ENCODE measurements at regions of chr12 and their contacts with region 1.

Region 1: DNA sequence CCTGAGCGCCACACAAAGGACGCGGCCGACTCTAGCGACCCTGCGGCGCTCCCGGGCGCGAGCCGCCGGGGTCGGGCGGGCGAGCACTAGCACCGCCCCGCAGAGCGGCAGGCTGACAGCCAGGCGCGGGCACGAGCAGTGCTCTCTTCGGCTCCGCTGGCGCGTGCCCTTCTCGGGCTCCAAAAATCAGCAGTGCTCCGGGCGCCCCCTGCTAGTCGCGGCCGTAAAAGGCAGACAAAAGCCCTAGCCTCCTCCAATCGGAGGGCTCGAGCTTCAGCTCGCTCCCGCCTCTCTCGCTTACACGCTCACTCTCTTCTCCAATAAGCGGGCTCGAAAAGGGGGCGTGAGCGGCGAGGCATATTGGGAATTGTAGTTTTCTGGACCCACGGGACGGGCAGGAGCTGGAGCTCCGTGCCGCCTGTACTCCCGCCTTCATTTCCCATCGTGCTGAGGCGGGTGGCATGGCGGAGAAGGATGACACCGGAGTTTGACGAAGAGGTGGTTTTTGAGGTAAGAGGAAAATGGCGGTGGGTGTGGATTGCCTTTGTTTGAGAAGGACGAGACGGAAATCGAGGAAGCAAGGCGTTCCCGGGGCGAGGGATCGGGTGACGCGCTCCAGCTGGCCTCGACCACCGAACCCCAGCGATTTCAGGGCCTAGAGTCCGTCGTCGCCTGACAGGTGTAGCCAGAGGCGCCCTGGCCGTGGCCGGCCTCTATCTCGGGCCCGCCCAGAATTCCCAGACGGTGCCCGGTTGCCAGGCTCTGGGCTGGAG is at the starts of genes FGD6 and VEZT:
- DNase-seq: peak; percentile 96 to 99 (median 99)
- H3K4me3 ChIP-seq: peak within 1 kb of the TSS; percentile 58 to 99 (median 89)
- H3K27ac ChIP-seq: peak within 1 kb of the TSS; percentile 75 to 99 (median 96)
- H3K27me3 ChIP-seq: no peaks in the 10 kb centered on the region
- CTCF ChIP-seq: peak; percentile 25 to 83 (median 64)
- total RNA-seq, gene FGD6: 10.5 to 41.6 (median 21.8) TPM
- total RNA-seq, gene VEZT: 79.5 to 165 (median 110) TPM

Region 2: DNA sequence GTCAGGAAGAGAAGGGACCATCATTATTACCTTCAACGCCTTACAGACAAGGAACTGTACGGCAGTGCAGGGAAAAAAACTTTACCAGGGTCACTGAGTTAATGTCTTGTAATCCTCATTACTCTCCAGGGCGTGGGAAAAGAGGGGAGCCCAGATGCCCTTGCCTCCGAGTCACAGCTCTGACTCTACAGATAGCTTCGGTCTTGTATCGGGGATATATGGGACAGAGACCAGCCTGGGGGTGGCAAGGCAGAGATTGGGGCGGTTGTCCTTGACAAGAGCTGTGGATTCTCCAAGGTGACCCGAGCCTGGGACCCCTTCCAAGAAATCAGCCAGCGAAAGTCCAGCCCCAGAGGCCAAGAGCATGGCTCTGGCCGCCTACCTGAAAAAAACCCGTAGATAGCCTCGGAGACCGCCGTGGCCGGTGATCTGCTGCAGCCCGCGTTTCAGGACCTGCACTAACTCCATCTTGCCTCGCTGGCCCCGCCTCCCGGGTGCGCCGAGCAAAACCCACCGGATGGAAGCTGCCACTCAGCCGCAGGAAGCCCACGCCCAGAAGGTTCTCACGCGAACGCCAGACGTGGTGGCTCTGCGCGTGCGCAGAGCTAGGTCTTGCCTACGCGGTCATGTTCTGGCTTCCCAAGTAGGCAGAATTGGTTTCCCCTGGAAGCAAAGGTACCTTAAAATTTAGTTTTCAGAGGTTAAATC is 214.2 kb before region 1 on chr12 and contains the start of gene NDUFA12:
- intact Hi-C with region 1: loop called in 1 of 2 experiments (anchors 2 kb)
- DNase-seq: peak; percentile 89 to 96 (median 95)
- H3K4me3 ChIP-seq: peak within 1 kb of the TSS; percentile 63 to 98 (median 88)
- H3K27ac ChIP-seq: peak within 1 kb of the TSS; percentile 51 to 95 (median 86)
- H3K27me3 ChIP-seq: no peaks in the 10 kb centered on the region
- CTCF ChIP-seq: peak in 35 of 56 donors; percentile 11 to 49 (median 25)
- total RNA-seq, gene NDUFA12: 53.8 to 149 (median 106) TPM

Region 3: GRCh38 chr12:95072900-95073697 is 144.5 kb before region 1 on chr12 and contains the start of gene NR2C1:
- intact Hi-C with region 1: loop called (anchors 2 kb)
- DNase-seq: peak; percentile 80 to 94 (median 92)
- H3K4me3 ChIP-seq: peak within 1 kb of the TSS; percentile 65 to 99 (median 94)
- H3K27ac ChIP-seq: peak within 1 kb of the TSS; percentile 51 to 98 (median 90)
- H3K27me3 ChIP-seq: no peaks in the 10 kb centered on the region
- CTCF ChIP-seq: no peak
- total RNA-seq, gene NR2C1: 38.6 to 107 (median 57.8) TPM

Region 4: DNA sequence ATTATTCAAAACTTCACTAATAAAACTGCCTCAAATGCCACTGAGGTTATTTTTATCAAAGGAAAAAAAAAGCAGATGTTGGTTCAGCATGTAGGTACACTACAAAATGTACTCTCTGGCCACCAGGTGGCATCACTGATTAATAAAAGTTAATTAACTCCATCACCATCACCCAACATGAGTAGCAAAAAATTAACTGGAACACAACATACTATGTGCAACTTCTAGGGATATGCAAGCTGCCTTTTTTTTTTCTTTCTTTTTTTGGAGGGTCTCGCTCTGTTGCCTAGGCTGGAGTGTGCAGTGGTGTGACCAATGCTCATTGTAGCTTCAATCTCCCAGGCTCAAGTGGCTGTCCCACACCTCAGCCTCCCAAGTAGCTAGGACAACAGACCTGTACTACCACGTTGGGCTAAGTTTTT is 100.4 kb before region 1 on chr12:
- intact Hi-C with region 1: loop called (anchors 5 kb)
- DNase-seq: peak in 4 of 10 donors; percentile 41 to 76 (median 60)
- H3K4me3 ChIP-seq: no peak overlapping the region
- H3K27ac ChIP-seq: no peak overlapping the region
- H3K27me3 ChIP-seq: no peaks in the 10 kb centered on the region
- CTCF ChIP-seq: peak; percentile 69 to 92 (median 84)

Region 5: DNA sequence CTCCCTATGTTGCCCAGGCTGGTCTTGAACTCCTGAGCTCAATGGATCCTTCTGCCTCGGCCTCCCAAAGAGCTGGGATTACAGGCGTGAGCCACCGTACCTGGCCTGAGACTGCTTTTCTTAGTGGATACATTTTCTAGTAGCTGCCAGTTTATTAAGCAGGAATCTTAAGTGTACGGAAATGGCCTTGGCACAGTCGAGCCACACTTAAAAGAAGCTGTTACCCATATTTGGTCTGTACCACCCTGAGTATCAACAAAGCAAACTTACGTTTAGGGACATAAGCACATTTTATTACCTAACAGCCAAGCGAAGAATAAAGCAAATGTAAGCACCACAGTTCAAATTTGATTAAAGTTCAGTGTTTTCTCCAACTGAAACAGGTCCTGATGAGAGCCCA is 93.5 kb before region 1 on chr12:
- intact Hi-C with region 1: loop called (anchors 5 kb)
- DNase-seq: no peak
- H3K4me3 ChIP-seq: no peak overlapping the region
- H3K27ac ChIP-seq: peak overlapping the region in 31 of 59 donors; percentile 3 to 76 (median 49)
- H3K27me3 ChIP-seq: no peaks in the 10 kb centered on the region
- CTCF ChIP-seq: no peak

Region 6: GRCh38 chr12:95336390-95337067 is 119.0 kb after region 1 on chr12:
- intact Hi-C with region 1: loop called in 1 of 2 experiments (anchors 5 kb)
- DNase-seq: peak; percentile 47 to 89 (median 75)
- H3K4me3 ChIP-seq: peak overlapping the region in 41 of 59 donors; percentile 4 to 55 (median 26)
- H3K27ac ChIP-seq: peak overlapping the region in 53 of 59 donors; percentile 2 to 87 (median 47)
- H3K27me3 ChIP-seq: no peaks in the 10 kb centered on the region
- CTCF ChIP-seq: peak; percentile 59 to 95 (median 82)

Region 7: GRCh38 chr12:95460896-95461661 is 243.5 kb after region 1 on chr12:
- intact Hi-C with region 1: no loop called
- DNase-seq: no peak
- H3K4me3 ChIP-seq: no peak overlapping the region
- H3K27ac ChIP-seq: no peak overlapping the region
- H3K27me3 ChIP-seq: no peaks in the 10 kb centered on the region
- CTCF ChIP-seq: no peak

Region 8: DNA sequence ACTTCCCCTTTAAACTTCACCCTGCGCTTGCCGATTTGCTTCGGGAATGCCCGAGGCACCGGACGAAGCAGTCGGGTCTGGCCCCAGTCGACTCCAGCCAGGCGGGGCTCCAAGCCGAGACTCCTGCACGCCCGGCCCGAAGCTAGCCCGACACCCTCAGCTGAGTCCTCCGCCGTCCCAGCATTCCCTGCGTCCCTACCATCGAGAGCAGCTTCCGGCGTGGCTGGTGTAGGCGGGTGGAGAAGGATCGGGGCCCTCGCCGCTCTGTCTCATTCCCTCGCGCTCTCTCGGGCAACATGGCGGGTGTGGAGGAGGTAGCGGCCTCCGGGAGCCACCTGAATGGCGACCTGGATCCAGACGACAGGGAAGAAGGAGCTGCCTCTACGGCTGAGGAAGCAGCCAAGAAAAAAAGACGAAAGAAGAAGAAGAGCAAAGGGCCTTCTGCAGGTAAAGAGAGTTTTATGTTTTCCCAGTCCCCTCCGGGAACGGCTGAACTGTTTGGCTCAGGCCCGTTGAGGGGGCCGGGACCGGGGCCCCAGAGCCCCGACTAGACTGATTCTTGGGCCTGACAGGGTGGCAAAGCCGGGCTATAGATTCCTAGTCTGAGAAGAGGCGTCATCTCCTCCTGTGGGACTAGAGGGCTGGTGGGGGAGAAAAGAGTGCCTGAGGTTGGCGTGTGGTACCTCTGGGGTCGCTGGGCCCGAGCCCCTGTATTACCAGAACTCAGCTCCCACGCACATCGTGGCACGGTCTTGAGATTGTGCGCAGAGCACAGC is 256.5 kb after region 1 on chr12 and contains the start of gene METAP2:
- intact Hi-C with region 1: loop called (anchors 1 to 5 kb)
- DNase-seq: peak; percentile 92 to 98 (median 96)
- H3K4me3 ChIP-seq: peak within 1 kb of the TSS; percentile 65 to 100 (median 96)
- H3K27ac ChIP-seq: peak within 1 kb of the TSS; percentile 59 to 97 (median 91)
- H3K27me3 ChIP-seq: no peaks in the 10 kb centered on the region
- CTCF ChIP-seq: peak in 36 of 56 donors; percentile 4 to 55 (median 25)
- total RNA-seq, gene METAP2: 38.9 to 82.5 (median 54.8) TPM

Measured in dorsolateral prefrontal cortex (tissue), 120 donors.